ENCODE measurements at regions of chr19 and their contacts with region 1.

Region 1: GRCh38 chr19:53333463-53334449 is at the start of gene ZNF845:
- H3K4me3 Mint-ChIP-seq: peak within 1 kb of the TSS; percentile 81
- H3K27ac Mint-ChIP-seq: peak within 1 kb of the TSS; percentile 86
- H3K4me1 Mint-ChIP-seq: peaks cover 17% of the 10 kb centered on the region
- H3K27me3 Mint-ChIP-seq: peaks cover 1% of the 10 kb centered on the region

Region 2: GRCh38 chr19:52535771-52536447 is 797.8 kb before region 1 on chr19:
- intact Hi-C with region 1: no loop called
- H3K4me3 Mint-ChIP-seq: peak overlapping the region; percentile 75
- H3K27ac Mint-ChIP-seq: peak overlapping the region; percentile 79
- H3K4me1 Mint-ChIP-seq: peaks cover 56% of the 10 kb centered on the region
- H3K27me3 Mint-ChIP-seq: no peaks in the 10 kb centered on the region

Region 3: GRCh38 chr19:53365134-53365898 is 31.6 kb after region 1 on chr19 and contains the start of gene ZNF525:
- intact Hi-C with region 1: loop called (anchors 1 kb)
- H3K4me3 Mint-ChIP-seq: peak within 1 kb of the TSS; percentile 92
- H3K27ac Mint-ChIP-seq: peak within 1 kb of the TSS; percentile 89
- H3K4me1 Mint-ChIP-seq: peaks cover 13% of the 10 kb centered on the region
- H3K27me3 Mint-ChIP-seq: peaks cover 6% of the 10 kb centered on the region

Region 4: GRCh38 chr19:53394974-53395839 is 61.5 kb after region 1 on chr19 and contains the start of gene ZNF765:
- intact Hi-C with region 1: loop called (anchors 2 kb)
- H3K4me3 Mint-ChIP-seq: peak within 1 kb of the TSS; percentile 91
- H3K27ac Mint-ChIP-seq: peak within 1 kb of the TSS; percentile 86
- H3K4me1 Mint-ChIP-seq: peaks cover 21% of the 10 kb centered on the region
- H3K27me3 Mint-ChIP-seq: no peaks in the 10 kb centered on the region

Measured in dendritic cell treated with granulocyte-macrophage colony-stimulating factor and Interleukin-4, amounts not matched to agents 40 ng/mL and 50 ng/mL, for 4 days (primary cell).